Astrocyte of the cerebellum (primary cell): ENCODE measurements at regions of chr1 and their contacts with region 1.

Region 1: GRCh38 chr1:219666242-219666641 is 53.3 kb upstream of the ZC3H11B start:
- DNase-seq: peak; percentile 90
- H3K4me3 ChIP-seq: no peak overlapping the region
- CTCF ChIP-seq: no peak

Region 2: DNA sequence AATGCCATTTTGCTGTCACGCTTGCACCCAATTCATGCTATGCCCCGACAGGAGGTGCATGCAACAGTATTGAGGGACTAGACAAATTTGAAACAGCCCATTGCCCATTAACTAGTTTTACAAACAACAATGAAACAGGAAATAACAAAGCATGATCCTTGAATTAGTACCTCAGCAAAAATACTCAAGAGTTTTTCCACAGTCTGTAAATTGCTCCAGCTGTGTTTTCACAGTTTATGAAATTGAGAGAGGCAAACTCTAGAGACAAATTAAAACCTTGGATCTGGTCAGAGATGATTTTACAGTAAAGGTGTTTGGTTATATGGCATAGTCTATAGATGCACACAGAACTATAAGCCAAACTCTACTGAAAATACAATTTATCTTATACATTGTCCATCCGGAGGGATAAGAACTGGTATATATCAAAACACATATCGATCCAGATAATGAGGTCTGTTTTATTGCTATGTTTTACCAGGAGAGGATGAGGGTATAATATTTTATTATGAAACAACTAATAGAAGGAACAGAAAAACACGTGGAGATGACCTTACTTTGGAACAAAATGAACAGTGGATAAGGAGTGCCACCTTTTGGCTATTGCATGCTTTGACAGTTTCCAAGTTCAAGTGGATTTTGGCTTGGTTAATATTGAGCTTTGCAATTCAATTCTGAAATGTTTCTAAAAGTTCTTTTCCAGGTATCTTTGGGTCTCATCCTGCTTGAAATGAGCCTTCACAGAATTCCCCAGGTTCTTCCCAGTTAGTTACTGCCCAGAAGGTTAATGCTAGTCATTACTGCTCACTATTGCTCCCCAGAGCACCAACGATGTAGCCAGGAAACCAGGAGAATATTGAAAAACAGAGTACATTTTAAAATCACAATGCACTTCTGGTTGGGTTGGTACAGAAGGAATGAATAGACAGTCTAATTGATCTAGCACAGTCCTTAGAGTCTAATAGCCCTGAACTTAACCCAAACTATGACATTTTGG is 99.0 kb before region 1 on chr1:
- in situ Hi-C with region 1: loop called (anchors 5 kb)
- DNase-seq: peak; percentile 71
- H3K4me3 ChIP-seq: no peak overlapping the region
- CTCF ChIP-seq: peak; percentile 65

Region 3: GRCh38 chr1:219824338-219824737 is 158.1 kb after region 1 on chr1:
- in situ Hi-C with region 1: no loop called
- DNase-seq: no peak
- H3K4me3 ChIP-seq: no peak overlapping the region
- CTCF ChIP-seq: no peak